ENCODE measurements at regions of chr2 and their contacts with region 1.

Region 1: GRCh38 chr2:70301344-70302194 is at the start of gene FAM136A:
- DNase-seq: peak; percentile 90
- ATAC-seq: peak; percentile 89
- H3K4me3 Mint-ChIP-seq: peak within 1 kb of the TSS; percentile 94
- H3K27ac Mint-ChIP-seq: peak within 1 kb of the TSS; percentile 98
- H3K4me1 Mint-ChIP-seq: peaks cover 41% of the 10 kb centered on the region
- H3K27me3 Mint-ChIP-seq: no peaks in the 10 kb centered on the region
- total RNA-seq, gene FAM136A: 45.5 to 51.0 TPM

Region 2: DNA sequence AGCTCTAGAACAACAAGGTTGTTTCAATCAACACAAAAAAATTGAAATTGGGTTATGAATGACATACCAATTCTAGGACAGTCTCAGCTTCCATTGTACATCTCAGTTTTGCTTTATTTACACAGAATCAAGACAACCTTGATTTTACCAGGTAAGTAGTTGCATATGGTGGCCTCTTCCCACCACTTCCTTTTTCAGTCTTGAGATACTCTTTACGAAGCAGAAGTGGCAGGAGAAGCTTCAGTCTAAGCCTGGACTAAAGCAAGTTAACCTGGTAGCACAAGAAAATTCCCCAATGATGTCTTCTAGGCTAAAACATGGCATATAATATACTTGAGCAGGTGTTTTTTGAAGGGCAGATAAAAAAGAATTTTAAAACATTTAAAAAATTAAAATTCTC is 11.0 kb after region 1 on chr2:
- CTCF ChIA-PET with region 1: interaction called, 15 read pairs
- POLR2A ChIA-PET with region 1: no interaction called
- DNase-seq: no peak
- ATAC-seq: no peak
- H3K4me3 Mint-ChIP-seq: no peak overlapping the region
- H3K27ac Mint-ChIP-seq: no peak overlapping the region
- H3K4me1 Mint-ChIP-seq: peaks cover 4% of the 10 kb centered on the region
- H3K27me3 Mint-ChIP-seq: peaks cover 19% of the 10 kb centered on the region

Region 3: GRCh38 chr2:70340921-70341765 is 39.6 kb after region 1 on chr2:
- CTCF ChIA-PET with region 1: interaction called, 38 read pairs
- POLR2A ChIA-PET with region 1: no interaction called
- DNase-seq: peak; percentile 44
- ATAC-seq: peak; percentile 60
- H3K4me3 Mint-ChIP-seq: no peak overlapping the region
- H3K27ac Mint-ChIP-seq: no peak overlapping the region
- H3K4me1 Mint-ChIP-seq: no peaks in the 10 kb centered on the region
- H3K27me3 Mint-ChIP-seq: peaks cover 25% of the 10 kb centered on the region

Region 4: GRCh38 chr2:70647873-70648481 is 346.4 kb after region 1 on chr2:
- CTCF ChIA-PET with region 1: interaction called, 95 read pairs
- POLR2A ChIA-PET with region 1: interaction called, 3 read pairs
- DNase-seq: peak; percentile 82
- ATAC-seq: peak; percentile 82
- H3K4me3 Mint-ChIP-seq: no peak overlapping the region
- H3K27ac Mint-ChIP-seq: no peak overlapping the region
- H3K4me1 Mint-ChIP-seq: no peaks in the 10 kb centered on the region
- H3K27me3 Mint-ChIP-seq: peaks cover 15% of the 10 kb centered on the region

Region 5: GRCh38 chr2:70948337-70949003 is 646.9 kb after region 1 on chr2:
- CTCF ChIA-PET with region 1: interaction called, 10 read pairs
- POLR2A ChIA-PET with region 1: no interaction called
- DNase-seq: peak; percentile 82
- ATAC-seq: peak; percentile 99
- H3K4me3 Mint-ChIP-seq: peak overlapping the region; percentile 48
- H3K27ac Mint-ChIP-seq: no peak overlapping the region
- H3K4me1 Mint-ChIP-seq: peaks cover 20% of the 10 kb centered on the region
- H3K27me3 Mint-ChIP-seq: peaks cover 22% of the 10 kb centered on the region